Colonic mucosa (tissue), 4 donors: ENCODE measurements at regions of chr3 and their contacts with region 1.

Region 1: GRCh38 chr3:49563040-49563578 is 8.8 kb downstream of the BSN start:
- DNase-seq: no peak
- H3K4me3 ChIP-seq: no peak overlapping the region
- H3K27ac ChIP-seq: no peak overlapping the region
- H3K4me1 ChIP-seq: no peaks in the 10 kb centered on the region
- H3K27me3 ChIP-seq: no peaks in the 10 kb centered on the region
- CTCF ChIP-seq: no peak

Region 2: DNA sequence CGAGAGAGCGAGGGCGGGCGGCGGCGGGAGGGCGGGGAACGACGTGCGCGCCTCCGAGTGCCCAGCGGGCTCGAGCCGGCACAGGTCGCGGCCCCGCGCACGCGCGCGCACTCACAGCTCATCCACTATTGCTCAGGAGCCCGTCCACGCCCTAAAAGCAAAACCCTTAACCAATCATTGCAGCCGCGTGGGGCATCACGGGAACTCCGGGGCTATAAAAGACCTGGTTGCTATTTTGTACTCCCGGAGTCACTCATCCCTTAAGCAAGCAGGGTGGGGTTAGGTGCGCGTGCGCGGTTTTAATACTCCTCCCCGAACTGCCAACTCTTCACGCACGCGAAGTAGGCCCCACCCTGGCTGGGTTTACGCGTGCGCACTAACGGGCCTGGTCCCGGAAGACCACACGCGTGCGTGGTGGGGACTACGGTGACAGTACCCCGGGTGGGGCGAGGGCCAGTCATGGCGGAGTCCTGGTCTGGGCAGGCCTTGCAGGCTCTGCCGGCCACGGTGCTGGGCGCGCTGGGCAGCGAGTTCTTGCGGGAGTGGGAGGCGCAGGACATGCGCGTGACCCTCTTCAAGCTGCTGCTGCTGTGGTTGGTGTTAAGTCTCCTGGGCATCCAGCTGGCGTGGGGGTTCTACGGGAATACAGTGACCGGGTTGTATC is 151.0 kb before region 1 on chr3 and contains the starts of genes RHOA and TCTA:
- intact Hi-C with region 1: no loop called
- DNase-seq: peak; percentile 99
- H3K4me3 ChIP-seq: peak within 1 kb of the TSS; percentile 95
- H3K27ac ChIP-seq: peak within 1 kb of the TSS; percentile 93
- H3K4me1 ChIP-seq: peaks cover 13% of the 10 kb centered on the region
- H3K27me3 ChIP-seq: no peaks in the 10 kb centered on the region
- CTCF ChIP-seq: no peak
- total RNA-seq, gene RHOA: 499 to 506 TPM
- total RNA-seq, gene TCTA: 35.0 to 37.6 TPM

Region 3: DNA sequence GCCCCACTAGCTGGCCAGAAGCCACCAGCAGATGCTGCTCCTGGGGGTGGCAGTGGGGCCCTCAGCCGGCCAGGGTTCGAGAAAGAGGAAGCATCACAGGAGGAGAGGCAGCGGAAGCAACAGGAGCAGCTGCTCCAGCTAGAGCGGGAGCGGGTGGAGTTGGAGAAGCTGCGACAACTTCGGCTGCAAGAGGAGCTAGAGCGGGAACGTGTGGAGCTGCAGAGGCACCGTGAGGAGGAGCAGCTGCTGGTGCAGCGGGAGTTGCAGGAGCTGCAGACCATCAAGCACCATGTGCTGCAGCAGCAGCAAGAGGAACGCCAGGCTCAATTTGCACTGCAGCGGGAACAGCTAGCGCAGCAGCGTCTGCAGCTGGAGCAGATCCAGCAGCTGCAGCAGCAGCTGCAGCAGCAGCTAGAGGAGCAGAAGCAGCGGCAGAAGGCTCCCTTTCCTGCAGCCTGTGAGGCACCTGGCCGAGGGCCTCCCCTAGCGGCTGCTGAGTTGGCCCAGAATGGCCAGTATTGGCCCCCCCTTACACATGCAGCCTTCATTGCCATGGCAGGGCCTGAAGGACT is 93.5 kb after region 1 on chr3:
- intact Hi-C with region 1: loop called (anchors 5 kb)
- DNase-seq: no peak
- H3K4me3 ChIP-seq: no peak overlapping the region
- H3K27ac ChIP-seq: no peak overlapping the region
- H3K4me1 ChIP-seq: no peaks in the 10 kb centered on the region
- H3K27me3 ChIP-seq: no peaks in the 10 kb centered on the region
- CTCF ChIP-seq: no peak